PC-9 (cell line): ENCODE measurements at regions of chr1 and their contacts with region 1.

Region 1: DNA sequence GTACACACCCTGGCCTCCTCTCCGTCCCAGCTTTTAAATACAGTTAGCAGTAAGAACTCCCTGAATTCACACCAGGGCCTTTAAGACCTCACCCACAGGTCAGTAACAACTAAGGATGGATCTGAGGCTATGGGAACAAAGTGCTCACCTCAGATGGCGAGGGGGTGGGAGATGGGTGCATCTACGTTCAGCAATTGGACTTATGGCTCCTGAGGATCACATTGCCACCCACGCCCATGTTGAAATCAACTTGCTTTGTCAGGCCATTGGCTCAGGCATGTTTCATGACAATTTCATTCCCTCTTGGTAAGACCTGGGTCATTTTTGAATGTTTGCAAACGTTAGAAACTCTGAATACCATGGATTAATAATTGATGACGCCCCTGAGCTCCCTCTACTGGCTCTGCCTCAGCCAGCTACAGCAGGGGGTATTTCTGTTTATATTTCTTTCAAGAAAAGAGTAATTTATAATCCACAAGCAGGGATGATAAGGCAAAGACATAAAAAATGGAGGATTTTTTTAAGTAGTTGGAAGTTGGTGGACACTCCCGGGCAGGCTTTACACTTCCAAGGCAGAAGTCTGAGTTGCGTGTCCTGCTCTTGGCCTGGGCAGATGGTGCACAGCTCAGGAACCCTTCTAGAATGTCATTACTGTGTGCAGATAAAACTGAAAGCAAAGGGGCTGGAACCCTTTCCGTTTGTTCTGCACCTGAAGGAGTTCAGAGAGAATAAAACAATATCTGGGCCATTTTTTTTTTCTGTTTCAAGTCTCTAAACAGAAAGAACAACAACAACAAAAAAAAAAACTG is 13.7 kb upstream of the LBR start:
- DNase-seq: no peak
- H3K4me3 ChIP-seq: no peak overlapping the region
- H3K27ac ChIP-seq: no peak overlapping the region
- H3K4me1 ChIP-seq: peaks cover 24% of the 10 kb centered on the region
- H3K27me3 ChIP-seq: no peaks in the 10 kb centered on the region
- CTCF ChIP-seq: no peak; the same call in 1 of the 2 replicates

Region 2: DNA sequence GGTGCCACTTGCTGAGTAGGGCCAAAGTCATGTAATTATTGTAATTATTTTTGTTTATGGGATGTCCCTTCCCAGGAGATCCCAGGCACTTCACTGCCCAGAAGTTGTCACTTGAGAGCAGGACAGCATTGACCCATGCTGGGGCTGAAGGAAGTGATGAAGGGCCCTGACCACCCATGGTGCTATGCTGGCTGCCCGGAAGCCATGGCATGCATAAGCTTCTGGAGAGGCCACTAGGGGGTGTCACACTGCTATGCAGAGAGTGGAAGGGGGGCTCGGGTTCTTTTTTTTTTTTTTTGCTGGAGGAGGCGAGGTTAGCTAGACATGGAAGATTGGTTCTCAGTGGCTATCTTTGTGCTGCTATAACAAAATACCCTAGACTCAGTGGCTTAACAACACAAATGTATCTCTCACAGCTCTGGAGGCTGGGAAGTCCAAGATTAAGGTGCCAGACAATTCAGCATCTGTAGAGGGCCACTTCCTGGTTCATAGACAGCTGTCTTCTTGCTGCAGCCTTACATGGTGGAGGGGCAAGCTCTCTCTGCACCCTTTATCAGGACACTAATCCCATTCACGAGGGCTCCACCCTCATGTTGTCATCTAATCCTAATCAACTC is 740.5 kb before region 1 on chr1:
- CTCF ChIA-PET with region 1: interaction called, 11 read pairs
- POLR2A ChIA-PET with region 1: no interaction called
- intact Hi-C with region 1: no loop called
- DNase-seq: no peak
- H3K4me3 ChIP-seq: no peak overlapping the region
- H3K27ac ChIP-seq: no peak overlapping the region
- H3K4me1 ChIP-seq: no peaks in the 10 kb centered on the region
- H3K27me3 ChIP-seq: no peaks in the 10 kb centered on the region
- CTCF ChIP-seq: peak; percentile 58

Region 3: DNA sequence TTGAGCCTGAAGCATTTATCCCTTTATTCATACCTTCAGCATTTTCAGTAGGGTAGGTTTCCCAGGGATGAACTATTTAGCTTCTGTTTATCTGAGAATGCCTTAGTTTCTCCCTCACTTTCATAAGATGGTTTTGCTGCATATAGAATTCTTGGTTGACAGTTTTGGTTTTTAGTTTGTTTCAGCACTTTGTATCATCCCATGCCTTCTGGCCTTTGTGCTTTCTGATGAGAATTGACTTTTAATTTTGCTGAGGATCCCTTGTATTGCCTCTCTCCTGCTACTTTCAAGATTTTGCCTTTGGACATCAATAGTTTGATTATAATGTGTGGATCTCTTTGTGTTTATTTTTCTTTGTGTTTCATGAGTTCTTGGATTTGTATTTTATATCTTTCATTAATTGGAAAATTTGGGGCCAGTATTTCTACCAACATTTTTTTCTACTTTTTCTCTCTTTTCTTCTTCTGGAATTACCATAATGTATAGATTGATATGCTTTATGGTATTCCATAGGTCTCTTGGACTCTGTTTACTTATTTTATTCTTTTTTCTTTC is 250.2 kb before region 1 on chr1:
- CTCF ChIA-PET with region 1: no interaction called
- POLR2A ChIA-PET with region 1: no interaction called
- intact Hi-C with region 1: no loop called
- DNase-seq: no peak
- H3K4me3 ChIP-seq: no peak overlapping the region
- H3K27ac ChIP-seq: no peak overlapping the region
- H3K4me1 ChIP-seq: no peaks in the 10 kb centered on the region
- H3K27me3 ChIP-seq: no peaks in the 10 kb centered on the region
- CTCF ChIP-seq: no peak

Region 4: GRCh38 chr1:225454733-225455132 is 13.2 kb after region 1 on chr1:
- CTCF ChIA-PET with region 1: interaction called, 12 read pairs
- POLR2A ChIA-PET with region 1: interaction called, 7 read pairs
- intact Hi-C with region 1: no loop called
- DNase-seq: peak; percentile 74 to 93
- H3K4me3 ChIP-seq: peak overlapping the region; percentile 20; the same call in 1 of the 2 replicates
- H3K27ac ChIP-seq: peak overlapping the region; percentile 98
- H3K4me1 ChIP-seq: peaks cover 66% of the 10 kb centered on the region
- H3K27me3 ChIP-seq: no peaks in the 10 kb centered on the region
- CTCF ChIP-seq: no peak

Region 5: DNA sequence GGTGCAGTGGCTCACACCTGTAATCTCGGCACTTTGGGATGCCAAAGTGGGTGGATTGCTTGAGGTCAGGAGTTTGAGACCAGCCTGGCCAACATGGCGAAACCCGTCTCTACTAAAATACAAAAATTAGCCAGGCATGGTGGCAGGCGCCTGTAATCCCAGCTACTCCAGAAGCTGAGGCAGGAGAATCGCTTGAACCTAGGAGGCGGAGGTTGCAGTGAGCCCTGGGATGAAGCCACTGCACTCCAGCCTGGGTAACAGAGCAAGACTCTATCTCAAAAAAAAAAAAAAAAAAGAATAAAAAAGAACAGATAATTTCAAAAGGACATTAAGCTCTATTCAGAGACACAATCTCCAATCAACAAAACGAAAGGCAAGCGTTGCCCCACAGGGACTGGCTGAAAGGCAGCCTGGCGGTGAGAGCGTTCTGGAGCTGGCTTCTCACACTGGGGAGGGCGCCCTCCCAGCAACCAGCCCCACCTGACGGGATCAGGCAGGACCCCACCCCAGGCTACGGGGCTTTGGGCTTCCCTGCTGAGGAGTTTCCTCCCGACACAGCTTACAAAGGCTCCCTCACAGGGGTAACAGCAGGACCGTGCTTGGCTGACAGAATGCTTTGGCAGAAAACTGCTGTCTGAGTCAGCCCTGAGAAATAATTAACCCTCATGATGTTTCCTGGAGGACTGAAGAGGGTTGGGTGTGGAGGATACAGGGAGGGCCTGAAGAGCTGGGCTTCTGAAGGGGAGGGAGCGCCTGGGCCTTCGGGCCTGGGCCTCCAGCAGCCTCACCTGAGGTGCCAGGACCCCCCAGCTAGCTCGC is 305.1 kb after region 1 on chr1:
- CTCF ChIA-PET with region 1: no interaction called
- POLR2A ChIA-PET with region 1: no interaction called
- intact Hi-C with region 1: no loop called
- DNase-seq: peak; percentile 59 to 74
- H3K4me3 ChIP-seq: peak overlapping the region; percentile 55; the same call in 1 of the 2 replicates
- H3K27ac ChIP-seq: peak overlapping the region; percentile 60
- H3K4me1 ChIP-seq: peaks cover 13% of the 10 kb centered on the region
- H3K27me3 ChIP-seq: no peaks in the 10 kb centered on the region
- CTCF ChIP-seq: no peak